MCF 10A (cell line): ENCODE measurements at regions of chr3 and their contacts with region 1.

Region 1: DNA sequence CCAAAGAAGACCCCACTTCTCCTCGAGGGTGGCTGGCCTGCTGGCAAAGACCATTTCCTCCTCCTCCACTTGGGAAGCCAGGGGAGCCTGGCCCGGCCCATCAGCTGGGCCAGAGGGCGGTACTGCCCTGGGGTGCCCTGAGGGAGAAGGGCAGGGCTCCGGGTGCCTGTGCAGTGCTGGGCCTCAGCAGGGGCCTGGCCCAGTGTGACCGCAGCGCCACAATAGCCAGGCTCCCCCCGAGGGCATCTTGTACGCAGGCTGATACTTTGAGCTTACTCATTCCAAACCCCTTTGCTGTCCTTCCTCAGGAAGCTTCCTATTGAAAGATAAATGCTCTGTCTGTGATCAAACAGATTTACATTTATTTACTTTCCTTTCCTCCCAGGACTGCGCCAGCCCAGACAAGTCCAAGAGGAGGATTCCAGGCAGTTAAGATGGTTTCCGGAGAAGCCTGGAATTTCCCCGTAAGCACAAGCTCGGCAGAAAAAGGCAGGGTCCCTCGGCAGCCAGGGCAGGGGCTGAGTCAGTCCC is 240.1 kb downstream of the XXYLT1 start:
- DNase-seq: peak; percentile 77
- H3K4me3 Mint-ChIP-seq: peak overlapping the region; percentile 25
- H3K27ac Mint-ChIP-seq: peak overlapping the region; percentile 91
- H3K4me1 Mint-ChIP-seq: peaks cover 17% of the 10 kb centered on the region
- H3K27me3 Mint-ChIP-seq: no peaks in the 10 kb centered on the region
- CTCF ChIP-seq: no peak

Region 2: GRCh38 chr3:194871143-194871863 is 159.6 kb before region 1 on chr3:
- CTCF ChIA-PET with region 1: interaction called, 3 read pairs
- POLR2A ChIA-PET with region 1: interaction called, 19 read pairs
- intact Hi-C with region 1: no loop called
- DNase-seq: peak; percentile 93
- H3K4me3 Mint-ChIP-seq: peak overlapping the region; percentile 71
- H3K27ac Mint-ChIP-seq: peak overlapping the region; percentile 82
- H3K4me1 Mint-ChIP-seq: peaks cover 36% of the 10 kb centered on the region
- H3K27me3 Mint-ChIP-seq: no peaks in the 10 kb centered on the region
- CTCF ChIP-seq: no peak